Activated naive CD4-positive, alpha-beta T cell treated with anti-CD3 and anti-CD28 coated beads for 36 hours (primary cell): ENCODE measurements at regions of chr15 and their contacts with region 1.

Region 1: GRCh38 chr15:35078221-35078915 is 6.7 kb downstream of the NANOGP8 start:
- DNase-seq: peak; percentile 47
- H3K4me3 Mint-ChIP-seq: no peak overlapping the region
- H3K27ac Mint-ChIP-seq: no peak overlapping the region
- H3K4me1 Mint-ChIP-seq: no peaks in the 10 kb centered on the region
- H3K27me3 Mint-ChIP-seq: no peaks in the 10 kb centered on the region

Region 2: GRCh38 chr15:33215941-33216872 is 1862.2 kb before region 1 on chr15:
- CTCF ChIA-PET with region 1: no interaction called
- intact Hi-C with region 1: no loop called
- DNase-seq: no peak
- H3K4me3 Mint-ChIP-seq: no peak overlapping the region
- H3K27ac Mint-ChIP-seq: no peak overlapping the region
- H3K4me1 Mint-ChIP-seq: no peaks in the 10 kb centered on the region
- H3K27me3 Mint-ChIP-seq: no peaks in the 10 kb centered on the region

Region 3: DNA sequence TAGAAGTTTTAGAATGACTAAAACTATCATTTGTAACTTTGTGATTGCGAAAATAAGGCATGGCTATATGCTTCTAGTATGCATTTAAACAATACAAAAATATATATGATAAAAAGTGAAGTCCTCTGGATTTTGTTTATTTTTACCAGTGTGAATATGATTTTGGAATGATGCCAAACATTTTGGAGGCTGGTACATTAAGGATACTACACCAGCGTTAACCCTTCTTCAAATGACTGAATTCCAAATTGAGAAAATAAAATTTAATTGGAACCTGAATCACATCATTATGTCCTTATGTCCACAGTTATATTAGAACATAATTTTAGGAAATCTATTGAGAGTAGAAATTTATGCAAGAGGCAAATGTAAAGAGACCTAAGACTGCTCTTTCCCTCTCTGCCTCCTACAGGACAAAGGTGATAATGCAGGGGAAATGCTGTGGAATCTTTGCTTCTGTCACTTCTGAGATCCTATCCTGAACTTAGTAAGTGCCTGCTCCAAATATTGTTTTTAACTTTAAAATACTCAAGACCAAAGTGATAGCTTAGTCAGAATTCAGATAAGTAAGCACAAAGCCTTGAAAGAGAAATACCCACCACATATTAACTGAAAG is 127.8 kb after region 1 on chr15:
- CTCF ChIA-PET with region 1: interaction called, 3 read pairs
- intact Hi-C with region 1: loop called (anchors 2 kb)
- DNase-seq: peak; percentile 12
- H3K4me3 Mint-ChIP-seq: no peak overlapping the region
- H3K27ac Mint-ChIP-seq: no peak overlapping the region
- H3K4me1 Mint-ChIP-seq: no peaks in the 10 kb centered on the region
- H3K27me3 Mint-ChIP-seq: no peaks in the 10 kb centered on the region

Region 4: GRCh38 chr15:35444557-35445204 is 366.3 kb after region 1 on chr15:
- CTCF ChIA-PET with region 1: interaction called, 39 read pairs
- intact Hi-C with region 1: loop called (anchors 2 kb)
- DNase-seq: no peak
- H3K4me3 Mint-ChIP-seq: no peak overlapping the region
- H3K27ac Mint-ChIP-seq: no peak overlapping the region
- H3K4me1 Mint-ChIP-seq: no peaks in the 10 kb centered on the region
- H3K27me3 Mint-ChIP-seq: no peaks in the 10 kb centered on the region